Activated naive CD4-positive, alpha-beta T cell treated with anti-CD3 and anti-CD28 coated beads, Interleukin-2, amount 10 ng/mL, durations not matched to agents 7 days and 5 days (primary cell): ENCODE measurements at regions of chr11 and their contacts with region 1.

Region 1: DNA sequence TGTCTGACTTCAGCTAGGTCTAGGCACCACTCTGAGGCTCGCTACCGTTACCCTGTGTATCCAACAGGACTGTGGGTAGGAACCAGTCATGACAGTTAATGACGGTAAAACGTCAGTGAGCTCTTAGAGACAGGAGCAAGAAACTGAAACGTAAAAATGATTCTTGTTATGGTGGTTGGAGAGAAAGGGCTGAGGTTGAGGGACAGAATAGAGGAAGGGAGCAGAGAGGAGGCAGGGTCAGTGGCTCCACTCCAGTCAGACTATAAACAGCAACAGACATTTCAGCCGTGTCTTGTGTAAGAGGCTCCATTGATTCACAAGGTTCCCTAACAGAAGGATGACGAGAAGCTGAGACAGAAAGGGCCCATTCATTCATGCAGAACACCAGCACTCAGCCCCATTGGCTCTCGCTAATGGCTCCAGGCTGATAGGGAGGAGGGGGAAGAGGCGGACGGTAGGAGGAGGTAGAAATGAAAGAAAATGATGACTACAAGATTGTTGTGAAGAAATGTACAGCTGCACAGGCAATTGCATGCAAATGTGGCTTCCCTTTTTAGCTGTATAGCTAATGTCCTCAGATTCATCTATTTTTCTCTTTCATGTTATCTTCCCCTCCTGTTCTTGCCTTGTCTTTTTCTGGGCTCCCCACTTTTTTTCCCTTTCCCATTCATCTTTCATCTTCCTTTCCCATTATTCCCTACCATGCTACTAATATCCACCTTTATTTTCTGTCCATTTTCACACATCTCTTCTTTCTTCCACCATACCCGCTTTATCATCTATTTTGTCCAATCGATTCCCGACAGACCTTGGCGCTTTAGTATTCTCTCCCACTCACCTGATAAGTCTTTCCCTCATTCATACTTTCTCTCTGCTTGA is 34.3 kb downstream of the ETS1 start:
- DNase-seq: no peak
- H3K4me3 Mint-ChIP-seq: no peak overlapping the region
- H3K27ac Mint-ChIP-seq: peak overlapping the region; percentile 82
- H3K4me1 Mint-ChIP-seq: peaks cover 59% of the 10 kb centered on the region
- H3K27me3 Mint-ChIP-seq: peaks cover under 1% of the 10 kb centered on the region

Region 2: GRCh38 chr11:128463371-128463829 is 89.6 kb before region 1 on chr11:
- CTCF ChIA-PET with region 1: no interaction called
- DNase-seq: no peak
- H3K4me3 Mint-ChIP-seq: peak overlapping the region; percentile 36
- H3K27ac Mint-ChIP-seq: peak overlapping the region; percentile 92
- H3K4me1 Mint-ChIP-seq: peaks cover 93% of the 10 kb centered on the region
- H3K27me3 Mint-ChIP-seq: no peaks in the 10 kb centered on the region

Region 3: DNA sequence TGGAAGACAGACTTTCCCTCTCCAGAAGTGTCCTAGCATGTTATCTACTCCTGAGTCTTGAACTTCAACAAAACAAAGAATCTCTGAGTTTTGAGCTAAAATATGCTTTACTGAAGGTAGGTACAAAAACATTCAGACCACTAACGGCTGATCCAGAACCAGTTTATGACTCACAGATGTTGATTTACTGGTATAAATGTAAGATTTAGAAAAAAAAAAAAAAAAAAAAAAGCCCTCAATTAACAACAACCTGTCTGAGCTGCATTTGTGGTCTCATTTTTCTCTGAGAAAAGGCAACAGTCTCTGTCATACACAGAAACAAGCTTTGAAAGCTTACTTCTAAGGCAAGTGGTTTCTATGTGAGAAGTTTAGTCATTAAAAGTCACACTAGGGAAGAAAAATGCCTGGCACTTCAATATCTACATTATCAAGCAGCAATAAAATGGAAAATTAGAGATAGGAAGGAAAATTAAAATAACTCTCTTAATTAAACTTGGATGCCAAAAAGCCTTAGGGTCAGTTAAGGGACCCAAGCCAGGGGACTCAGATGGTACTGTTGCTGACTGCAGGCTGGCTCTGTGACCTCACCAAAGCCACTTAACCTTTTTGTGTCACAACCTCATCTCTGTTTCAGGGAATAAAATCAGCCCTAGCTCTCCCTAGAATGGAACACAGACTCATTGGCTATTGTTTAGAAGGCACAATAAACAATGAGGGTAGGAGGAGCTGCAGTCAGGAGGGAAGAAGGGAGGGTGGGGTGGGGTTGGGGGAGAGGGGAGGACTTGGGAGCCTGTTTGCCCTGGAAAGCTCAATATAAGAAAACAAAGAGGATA is 27.4 kb before region 1 on chr11:
- CTCF ChIA-PET with region 1: interaction called, 11 read pairs
- DNase-seq: peak; percentile 58
- H3K4me3 Mint-ChIP-seq: peak overlapping the region; percentile 59
- H3K27ac Mint-ChIP-seq: peak overlapping the region; percentile 100
- H3K4me1 Mint-ChIP-seq: peaks cover 71% of the 10 kb centered on the region
- H3K27me3 Mint-ChIP-seq: no peaks in the 10 kb centered on the region

Region 4: DNA sequence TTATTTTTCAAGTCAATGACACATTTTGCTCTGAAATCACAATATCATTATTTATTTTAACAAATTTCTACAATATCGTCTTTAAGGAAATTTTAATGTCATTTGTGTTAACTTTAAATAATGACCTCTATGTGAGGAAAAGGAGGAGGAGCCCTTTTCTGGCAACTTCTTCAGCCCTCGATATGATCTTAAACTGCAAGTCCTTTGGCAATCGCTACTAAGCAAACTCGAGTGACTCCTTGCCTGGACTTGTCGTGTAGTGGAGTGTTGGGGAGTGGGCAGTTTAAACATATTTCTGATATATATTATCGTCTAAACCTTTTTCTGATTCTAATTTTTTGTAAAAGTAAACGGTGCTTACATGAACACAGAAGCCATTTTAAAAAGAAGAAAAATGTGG is 17.6 kb after region 1 on chr11:
- CTCF ChIA-PET with region 1: no interaction called
- DNase-seq: no peak
- H3K4me3 Mint-ChIP-seq: no peak overlapping the region
- H3K27ac Mint-ChIP-seq: no peak overlapping the region
- H3K4me1 Mint-ChIP-seq: peaks cover 25% of the 10 kb centered on the region
- H3K27me3 Mint-ChIP-seq: peaks cover 15% of the 10 kb centered on the region

Region 5: GRCh38 chr11:129611661-129612446 is 1058.8 kb after region 1 on chr11:
- CTCF ChIA-PET with region 1: no interaction called
- DNase-seq: no peak
- H3K4me3 Mint-ChIP-seq: no peak overlapping the region
- H3K27ac Mint-ChIP-seq: peak overlapping the region; percentile 21
- H3K4me1 Mint-ChIP-seq: no peaks in the 10 kb centered on the region
- H3K27me3 Mint-ChIP-seq: no peaks in the 10 kb centered on the region